Activated CD4-positive, alpha-beta memory T cell treated with anti-CD3 and anti-CD28 coated beads for 36 hours (primary cell): ENCODE measurements at regions of chr11 and their contacts with region 1.

Region 1: GRCh38 chr11:128859563-128860441 is 7.3 kb downstream of the KCNJ1 start:
- DNase-seq: peak; percentile 87
- H3K4me3 Mint-ChIP-seq: no peak overlapping the region
- H3K27ac Mint-ChIP-seq: no peak overlapping the region
- H3K4me1 Mint-ChIP-seq: peaks cover 4% of the 10 kb centered on the region
- H3K27me3 Mint-ChIP-seq: peaks cover 2% of the 10 kb centered on the region

Region 2: GRCh38 chr11:127943763-127944162 is 916.0 kb before region 1 on chr11:
- CTCF ChIA-PET with region 1: no interaction called
- POLR2A ChIA-PET with region 1: no interaction called
- intact Hi-C with region 1: loop called (anchors 10 kb)
- DNase-seq: peak; percentile 43
- H3K4me3 Mint-ChIP-seq: no peak overlapping the region
- H3K27ac Mint-ChIP-seq: no peak overlapping the region
- H3K4me1 Mint-ChIP-seq: peaks cover 13% of the 10 kb centered on the region
- H3K27me3 Mint-ChIP-seq: peaks cover 19% of the 10 kb centered on the region

Region 3: GRCh38 chr11:128026596-128026995 is 833.2 kb before region 1 on chr11:
- CTCF ChIA-PET with region 1: interaction called, 4 read pairs
- POLR2A ChIA-PET with region 1: no interaction called
- intact Hi-C with region 1: loop called (anchors 2 kb)
- DNase-seq: no peak
- H3K4me3 Mint-ChIP-seq: no peak overlapping the region
- H3K27ac Mint-ChIP-seq: no peak overlapping the region
- H3K4me1 Mint-ChIP-seq: peaks cover 9% of the 10 kb centered on the region
- H3K27me3 Mint-ChIP-seq: peaks cover 3% of the 10 kb centered on the region

Region 4: GRCh38 chr11:128365044-128365443 is 494.8 kb before region 1 on chr11:
- CTCF ChIA-PET with region 1: no interaction called
- POLR2A ChIA-PET with region 1: no interaction called
- intact Hi-C with region 1: no loop called
- DNase-seq: no peak
- H3K4me3 Mint-ChIP-seq: no peak overlapping the region
- H3K27ac Mint-ChIP-seq: no peak overlapping the region
- H3K4me1 Mint-ChIP-seq: peaks cover 27% of the 10 kb centered on the region
- H3K27me3 Mint-ChIP-seq: no peaks in the 10 kb centered on the region

Region 5: GRCh38 chr11:128686745-128687177 is 173.0 kb before region 1 on chr11:
- CTCF ChIA-PET with region 1: no interaction called
- POLR2A ChIA-PET with region 1: no interaction called
- intact Hi-C with region 1: no loop called
- DNase-seq: peak; percentile 72
- H3K4me3 Mint-ChIP-seq: peak overlapping the region; percentile 71
- H3K27ac Mint-ChIP-seq: no peak overlapping the region
- H3K4me1 Mint-ChIP-seq: peaks cover 34% of the 10 kb centered on the region
- H3K27me3 Mint-ChIP-seq: peaks cover 37% of the 10 kb centered on the region

Region 6: DNA sequence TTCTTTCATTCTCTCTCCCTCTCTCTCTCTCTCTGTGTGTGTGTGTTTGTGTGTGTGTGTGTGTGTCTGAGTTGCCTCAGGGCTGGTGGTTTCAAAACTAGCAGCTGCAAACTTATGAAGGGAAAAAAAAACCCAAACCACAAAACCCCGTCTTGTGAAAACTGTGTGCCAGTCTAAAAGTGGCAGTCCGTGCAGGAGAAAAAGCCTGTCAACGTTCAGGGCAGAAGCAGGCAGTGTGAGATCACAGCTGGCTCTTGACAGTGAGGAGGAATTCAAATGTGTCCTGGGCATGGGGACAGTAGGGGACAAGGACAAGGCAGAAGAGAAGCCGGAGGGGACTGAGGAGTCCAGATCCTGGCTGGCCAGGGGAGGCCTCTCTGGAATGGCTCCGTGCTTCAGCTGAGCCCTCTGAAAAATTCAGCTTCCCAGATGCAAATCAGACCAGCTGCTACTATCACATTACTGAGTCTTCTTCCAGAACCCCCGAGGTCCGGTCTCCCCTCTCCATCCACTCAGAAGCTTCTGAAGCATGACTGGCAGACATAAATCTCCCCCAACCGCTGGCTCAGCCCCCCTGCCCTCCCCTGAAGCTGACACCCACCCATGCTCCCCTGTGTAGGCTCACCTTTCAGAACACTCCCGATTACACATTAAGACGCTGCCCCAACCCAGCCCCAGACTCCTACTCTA is 134.0 kb before region 1 on chr11:
- CTCF ChIA-PET with region 1: no interaction called
- POLR2A ChIA-PET with region 1: no interaction called
- intact Hi-C with region 1: no loop called
- DNase-seq: peak; percentile 65
- H3K4me3 Mint-ChIP-seq: peak overlapping the region; percentile 59
- H3K27ac Mint-ChIP-seq: peak overlapping the region; percentile 82
- H3K4me1 Mint-ChIP-seq: peaks cover 98% of the 10 kb centered on the region
- H3K27me3 Mint-ChIP-seq: no peaks in the 10 kb centered on the region

Region 7: GRCh38 chr11:128824191-128825049 is 35.4 kb before region 1 on chr11:
- CTCF ChIA-PET with region 1: no interaction called
- POLR2A ChIA-PET with region 1: no interaction called
- intact Hi-C with region 1: no loop called
- DNase-seq: no peak
- H3K4me3 Mint-ChIP-seq: no peak overlapping the region
- H3K27ac Mint-ChIP-seq: no peak overlapping the region
- H3K4me1 Mint-ChIP-seq: no peaks in the 10 kb centered on the region
- H3K27me3 Mint-ChIP-seq: no peaks in the 10 kb centered on the region

Region 8: DNA sequence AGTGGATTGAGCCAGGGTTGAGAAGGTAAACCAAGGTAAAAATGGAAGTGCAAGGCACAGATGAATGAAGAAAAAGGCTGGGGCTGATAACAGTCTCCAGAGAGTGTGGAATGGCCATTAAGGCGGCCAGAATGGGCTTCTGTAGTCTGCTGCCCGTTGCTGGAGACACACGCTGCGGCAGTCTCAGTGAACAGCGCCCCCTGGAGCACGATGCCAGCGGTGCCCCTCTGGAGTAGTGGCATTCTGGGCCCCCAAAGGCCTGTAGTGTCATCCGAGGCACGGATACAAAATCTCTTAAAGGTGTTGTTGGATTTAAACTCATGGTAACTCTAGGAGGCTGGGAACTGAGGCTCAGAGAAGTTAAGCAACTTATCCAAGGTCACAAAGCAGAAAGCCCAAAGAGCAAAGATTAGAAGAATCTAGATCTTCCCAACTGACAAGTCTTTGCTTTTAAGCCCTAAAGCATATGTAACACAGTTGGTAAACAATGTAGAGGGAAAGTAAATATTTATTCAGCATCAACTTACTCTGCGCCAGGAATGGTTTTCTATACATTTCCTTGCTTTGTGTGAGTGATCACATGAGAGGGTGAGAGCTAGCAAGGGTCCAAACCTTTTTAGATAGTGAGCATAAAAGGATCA is 10.9 kb before region 1 on chr11:
- CTCF ChIA-PET with region 1: interaction called, 38 read pairs
- POLR2A ChIA-PET with region 1: no interaction called
- intact Hi-C with region 1: loop called (anchors 2 kb)
- DNase-seq: peak; percentile 82
- H3K4me3 Mint-ChIP-seq: no peak overlapping the region
- H3K27ac Mint-ChIP-seq: no peak overlapping the region
- H3K4me1 Mint-ChIP-seq: peaks cover 23% of the 10 kb centered on the region
- H3K27me3 Mint-ChIP-seq: no peaks in the 10 kb centered on the region